CD4-positive, alpha-beta T cell (primary cell): ENCODE measurements at regions of chr1 and their contacts with region 1.

Region 1: GRCh38 chr1:205284343-205285144 is 37.0 kb downstream of the NUAK2 start:
- DNase-seq: peak; percentile 73 to 97 (median 93)
- ATAC-seq: peak; percentile 66
- H3K4me3 ChIP-seq: peak overlapping the region; percentile 50
- H3K4me3 Mint-ChIP-seq: peak overlapping the region; percentile 82
- H3K27ac ChIP-seq: peak overlapping the region; percentile 72 to 90
- H3K27ac Mint-ChIP-seq: peak overlapping the region; percentile 97
- H3K4me1 ChIP-seq: peaks cover 92% of the 10 kb centered on the region
- H3K4me1 Mint-ChIP-seq: peaks cover 81% of the 10 kb centered on the region
- H3K27me3 ChIP-seq: no peaks in the 10 kb centered on the region
- H3K27me3 Mint-ChIP-seq: no peaks in the 10 kb centered on the region
- CTCF ChIP-seq: no peak

Region 2: GRCh38 chr1:204171751-204172178 is 1112.8 kb before region 1 on chr1:
- CTCF ChIA-PET with region 1: no interaction called
- POLR2A ChIA-PET with region 1: no interaction called
- intact Hi-C with region 1: no loop called
- DNase-seq: no peak
- ATAC-seq: no peak
- H3K4me3 ChIP-seq: no peak overlapping the region
- H3K4me3 Mint-ChIP-seq: no peak overlapping the region
- H3K27ac ChIP-seq: no peak overlapping the region
- H3K27ac Mint-ChIP-seq: no peak overlapping the region
- H3K4me1 ChIP-seq: no peaks in the 10 kb centered on the region
- H3K4me1 Mint-ChIP-seq: no peaks in the 10 kb centered on the region
- H3K27me3 ChIP-seq: peaks cover 3 to 9% of the 10 kb centered on the region in 2 experiments
- H3K27me3 Mint-ChIP-seq: peaks cover 7% of the 10 kb centered on the region
- CTCF ChIP-seq: no peak

Region 3: GRCh38 chr1:204837440-204838084 is 447.0 kb before region 1 on chr1:
- CTCF ChIA-PET with region 1: no interaction called
- POLR2A ChIA-PET with region 1: no interaction called
- intact Hi-C with region 1: no loop called
- DNase-seq: peak in 6 of 14 experiments; percentile 4 to 33 (median 15)
- ATAC-seq: no peak
- H3K4me3 ChIP-seq: no peak overlapping the region
- H3K4me3 Mint-ChIP-seq: no peak overlapping the region
- H3K27ac ChIP-seq: no peak overlapping the region
- H3K27ac Mint-ChIP-seq: no peak overlapping the region
- H3K4me1 ChIP-seq: no peaks in the 10 kb centered on the region
- H3K4me1 Mint-ChIP-seq: no peaks in the 10 kb centered on the region
- H3K27me3 ChIP-seq: peaks cover 5 to 18% of the 10 kb centered on the region in 2 experiments
- H3K27me3 Mint-ChIP-seq: peaks cover 70% of the 10 kb centered on the region
- CTCF ChIP-seq: no peak

Region 4: GRCh38 chr1:205150651-205151428 is 133.7 kb before region 1 on chr1:
- CTCF ChIA-PET with region 1: no interaction called
- POLR2A ChIA-PET with region 1: no interaction called
- intact Hi-C with region 1: no loop called
- DNase-seq: no peak
- ATAC-seq: no peak
- H3K4me3 ChIP-seq: no peak overlapping the region
- H3K4me3 Mint-ChIP-seq: no peak overlapping the region
- H3K27ac ChIP-seq: no peak overlapping the region
- H3K27ac Mint-ChIP-seq: no peak overlapping the region
- H3K4me1 ChIP-seq: no peaks in the 10 kb centered on the region
- H3K4me1 Mint-ChIP-seq: no peaks in the 10 kb centered on the region
- H3K27me3 ChIP-seq: no peaks in the 10 kb centered on the region
- H3K27me3 Mint-ChIP-seq: no peaks in the 10 kb centered on the region
- CTCF ChIP-seq: no peak

Region 5: DNA sequence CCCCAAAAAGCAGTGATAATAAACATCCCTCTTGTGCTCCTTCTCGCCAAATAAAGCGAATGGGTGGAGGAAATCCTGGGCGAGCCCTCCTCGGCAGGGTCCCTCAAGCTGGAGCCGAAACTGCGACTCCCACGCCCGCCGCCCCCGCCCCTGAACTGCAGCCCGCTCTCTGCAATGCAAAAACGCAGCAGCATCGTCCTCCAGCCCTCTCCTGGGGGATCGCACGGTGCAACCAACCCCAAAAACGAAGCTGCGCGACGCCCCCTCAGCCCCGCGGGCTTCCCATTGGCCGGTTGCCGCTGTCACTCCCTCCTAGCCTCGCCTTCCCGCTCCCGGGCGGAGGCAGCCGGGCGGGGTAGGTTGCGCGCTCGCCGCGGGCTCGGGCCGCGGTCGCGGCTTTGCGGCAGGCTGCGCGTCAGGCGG is 56.9 kb before region 1 on chr1 and contains the start of gene TMCC2:
- CTCF ChIA-PET with region 1: interaction called, 7 read pairs
- POLR2A ChIA-PET with region 1: interaction called, 11 read pairs
- intact Hi-C with region 1: no loop called
- DNase-seq: peak; percentile 49 to 87 (median 74)
- ATAC-seq: peak; percentile 76
- H3K4me3 ChIP-seq: peak within 1 kb of the TSS; percentile 64
- H3K4me3 Mint-ChIP-seq: peak within 1 kb of the TSS; percentile 94
- H3K27ac ChIP-seq: no peak within 1 kb of the TSS
- H3K27ac Mint-ChIP-seq: peak within 1 kb of the TSS; percentile 4
- H3K4me1 ChIP-seq: peaks cover 31% of the 10 kb centered on the region
- H3K4me1 Mint-ChIP-seq: peaks cover 30% of the 10 kb centered on the region
- H3K27me3 ChIP-seq: peaks cover 5 to 8% of the 10 kb centered on the region in 2 experiments
- H3K27me3 Mint-ChIP-seq: peaks cover 22% of the 10 kb centered on the region
- CTCF ChIP-seq: no peak
- total RNA-seq, gene TMCC2: 0.74 to 1.1 TPM

Region 6: DNA sequence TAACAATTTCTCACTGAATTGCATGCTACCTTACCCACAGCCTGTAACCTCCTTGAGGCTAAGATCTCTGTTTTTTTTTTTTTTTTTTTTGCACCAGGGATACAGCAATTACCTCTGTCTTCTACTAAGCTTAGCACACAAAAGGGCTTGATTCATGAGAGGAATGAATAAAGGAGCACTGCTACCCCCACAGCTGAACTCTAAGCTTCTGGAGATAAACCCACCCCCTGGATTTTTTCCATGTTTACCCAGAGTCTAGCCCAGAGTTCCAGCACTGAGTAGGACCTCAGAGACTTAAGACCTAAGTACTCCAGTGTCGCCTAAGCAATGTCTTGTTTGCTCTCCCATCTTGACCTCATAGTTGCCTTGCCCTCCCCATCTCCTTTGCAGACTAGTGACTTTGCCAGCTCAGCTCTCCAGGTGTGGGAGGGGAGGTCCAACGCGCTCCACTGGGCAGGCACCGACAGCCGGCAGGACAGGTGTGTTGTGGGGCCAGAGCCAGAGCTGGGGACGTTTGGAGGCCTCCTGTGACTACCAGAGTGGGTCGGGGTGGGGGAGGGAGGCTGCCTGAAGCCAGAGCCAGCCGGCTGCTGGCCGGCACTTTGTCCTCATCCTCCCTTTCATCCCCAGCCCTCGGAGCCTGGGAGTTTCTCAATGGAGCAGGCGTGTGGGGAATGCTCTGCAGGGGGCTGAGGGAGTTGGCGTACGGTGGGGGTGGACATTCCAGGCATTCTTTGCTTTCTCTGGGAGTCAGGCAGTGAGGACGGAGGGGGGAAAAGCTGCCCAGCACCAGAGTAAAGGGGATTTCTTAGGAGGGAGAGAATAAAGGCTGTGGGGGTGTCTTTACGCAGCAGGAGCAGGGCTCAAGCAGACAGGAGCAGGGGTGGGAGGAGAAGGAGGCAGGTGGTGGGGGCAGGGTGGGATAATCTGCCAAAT is 16.6 kb after region 1 on chr1:
- CTCF ChIA-PET with region 1: interaction called, 5 read pairs
- POLR2A ChIA-PET with region 1: interaction called, 158 read pairs
- intact Hi-C with region 1: no loop called
- DNase-seq: no peak
- ATAC-seq: no peak
- H3K4me3 ChIP-seq: no peak overlapping the region
- H3K4me3 Mint-ChIP-seq: no peak overlapping the region
- H3K27ac ChIP-seq: peak overlapping the region in 1 of 2 donors; percentile 7
- H3K27ac Mint-ChIP-seq: peak overlapping the region; percentile 67
- H3K4me1 ChIP-seq: peaks cover 32% of the 10 kb centered on the region
- H3K4me1 Mint-ChIP-seq: peaks cover 60% of the 10 kb centered on the region
- H3K27me3 ChIP-seq: no peaks in the 10 kb centered on the region
- H3K27me3 Mint-ChIP-seq: no peaks in the 10 kb centered on the region
- CTCF ChIP-seq: no peak

Region 7: DNA sequence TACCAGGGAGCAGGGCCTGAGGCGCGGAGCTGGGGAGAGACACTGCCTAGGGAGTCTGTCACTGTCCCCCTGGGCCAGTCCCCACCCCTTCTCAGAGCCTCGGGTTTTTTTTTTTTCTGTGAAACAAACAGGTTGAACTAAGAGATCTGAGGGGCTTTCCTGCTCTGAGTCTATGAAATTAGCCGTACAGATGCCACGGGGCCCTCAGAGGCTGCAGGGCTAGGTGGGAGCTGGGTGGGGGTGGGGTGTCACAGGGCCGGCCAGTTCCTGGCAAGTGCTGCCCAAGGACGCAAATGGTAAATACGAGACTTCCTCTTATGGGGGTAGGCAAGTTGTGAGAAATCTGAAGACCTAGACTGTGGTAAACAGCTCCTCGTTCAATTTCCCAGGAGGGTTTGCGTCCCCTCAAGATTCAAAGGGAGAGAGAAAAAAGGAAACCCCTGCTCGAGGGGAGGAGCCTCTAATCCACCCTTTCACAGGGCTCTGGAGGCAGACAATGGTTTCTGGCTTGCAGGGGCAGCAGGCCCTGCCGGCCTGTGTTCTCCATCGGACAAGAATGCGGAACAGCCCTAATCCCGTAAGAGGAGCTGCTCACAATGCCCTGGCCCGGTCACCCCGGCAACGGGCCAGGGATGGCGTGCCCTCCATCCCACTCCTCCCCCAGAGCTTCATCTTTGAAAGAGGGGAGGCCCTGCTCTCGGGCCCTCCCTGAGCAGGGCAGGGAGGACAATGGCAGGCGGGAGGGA is 29.2 kb after region 1 on chr1:
- CTCF ChIA-PET with region 1: interaction called, 322 read pairs
- POLR2A ChIA-PET with region 1: interaction called, 918 read pairs
- intact Hi-C with region 1: loop called in 1 of 2 experiments (anchors 1 kb)
- DNase-seq: peak in 11 of 14 experiments; percentile 5 to 73 (median 33)
- ATAC-seq: peak; percentile 81
- H3K4me3 ChIP-seq: peak overlapping the region; percentile 50
- H3K4me3 Mint-ChIP-seq: peak overlapping the region; percentile 93
- H3K27ac ChIP-seq: peak overlapping the region; percentile 30 to 85
- H3K27ac Mint-ChIP-seq: peak overlapping the region; percentile 99
- H3K4me1 ChIP-seq: peaks cover 89% of the 10 kb centered on the region
- H3K4me1 Mint-ChIP-seq: peaks cover 91% of the 10 kb centered on the region
- H3K27me3 ChIP-seq: no peaks in the 10 kb centered on the region
- H3K27me3 Mint-ChIP-seq: no peaks in the 10 kb centered on the region
- CTCF ChIP-seq: no peak

Region 8: GRCh38 chr1:205458777-205459566 is 174.4 kb after region 1 on chr1:
- CTCF ChIA-PET with region 1: no interaction called
- POLR2A ChIA-PET with region 1: no interaction called
- intact Hi-C with region 1: no loop called
- DNase-seq: peak in 7 of 14 experiments; percentile 15 to 58 (median 28)
- ATAC-seq: peak; percentile 78
- H3K4me3 ChIP-seq: no peak overlapping the region
- H3K4me3 Mint-ChIP-seq: peak overlapping the region; percentile 23
- H3K27ac ChIP-seq: no peak overlapping the region
- H3K27ac Mint-ChIP-seq: no peak overlapping the region
- H3K4me1 ChIP-seq: peaks cover 24% of the 10 kb centered on the region
- H3K4me1 Mint-ChIP-seq: peaks cover 14% of the 10 kb centered on the region
- H3K27me3 ChIP-seq: peaks cover 47 to 59% of the 10 kb centered on the region in 2 experiments
- H3K27me3 Mint-ChIP-seq: peaks cover 64% of the 10 kb centered on the region
- CTCF ChIP-seq: no peak